ENCODE measurements at regions of chr18 and their contacts with region 1.

Region 1: DNA sequence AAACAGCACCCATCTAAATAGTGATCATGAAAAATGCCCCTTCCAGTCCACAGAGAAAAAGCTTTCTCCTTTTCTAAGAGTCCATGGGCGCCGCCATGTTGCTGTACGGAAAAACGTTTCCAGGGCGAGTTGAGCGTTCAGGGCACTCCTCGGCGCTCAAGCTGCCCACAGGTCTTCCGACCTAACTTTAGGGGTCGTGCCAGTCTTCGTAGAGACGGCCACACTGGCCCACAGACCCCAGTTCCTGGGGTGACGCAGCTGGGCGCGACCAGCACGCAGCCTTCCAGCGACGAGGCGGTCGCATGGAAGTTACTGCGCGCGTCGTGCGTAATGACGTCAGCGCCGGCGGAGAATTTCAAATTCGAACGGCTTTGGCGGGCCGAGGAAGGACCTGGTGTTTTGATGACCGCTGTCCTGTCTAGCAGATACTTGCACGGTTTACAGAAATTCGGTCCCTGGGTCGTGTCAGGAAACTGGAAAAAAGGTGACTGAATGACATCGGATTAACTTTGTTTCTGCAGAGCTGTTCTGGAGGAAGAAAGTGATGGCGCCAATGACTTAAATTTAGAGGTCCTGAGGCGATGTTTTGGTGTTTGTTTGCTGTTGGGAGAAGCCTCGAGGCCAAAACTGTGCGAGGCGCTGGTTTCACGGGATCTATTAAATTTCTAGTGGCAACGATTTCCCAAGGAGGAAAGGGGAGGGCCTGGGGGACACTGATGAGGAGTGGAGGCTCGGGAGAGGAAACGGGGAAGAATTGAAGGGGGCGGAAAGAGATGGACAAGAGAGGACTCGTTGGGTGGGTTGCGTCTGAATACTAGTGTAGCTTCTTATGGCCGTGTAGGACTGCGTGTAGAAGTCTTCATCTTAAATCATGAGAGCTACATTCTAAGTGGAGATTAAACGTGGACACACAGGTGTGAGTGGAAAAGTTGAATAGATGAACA is at the starts of genes METTL4 and NDC80:
- DNase-seq: peak; percentile 75 to 95 (median 82)
- ATAC-seq: peak; percentile 86 to 89
- H3K4me3 Mint-ChIP-seq: peak within 1 kb of the TSS; percentile 93 to 100 (median 98)
- H3K27ac Mint-ChIP-seq: peak within 1 kb of the TSS; percentile 95 to 100 (median 99)
- H3K4me1 Mint-ChIP-seq: peaks cover 29 to 68% (median 56%) of the 10 kb centered on the region in 4 donors
- H3K27me3 Mint-ChIP-seq: no peaks in the 10 kb centered on the region
- polyA plus RNA-seq, gene METTL4: 14.7 to 17.5 (median 16.9) TPM
- polyA plus RNA-seq, gene NDC80: 1.7 to 2.9 (median 1.9) TPM

Region 2: DNA sequence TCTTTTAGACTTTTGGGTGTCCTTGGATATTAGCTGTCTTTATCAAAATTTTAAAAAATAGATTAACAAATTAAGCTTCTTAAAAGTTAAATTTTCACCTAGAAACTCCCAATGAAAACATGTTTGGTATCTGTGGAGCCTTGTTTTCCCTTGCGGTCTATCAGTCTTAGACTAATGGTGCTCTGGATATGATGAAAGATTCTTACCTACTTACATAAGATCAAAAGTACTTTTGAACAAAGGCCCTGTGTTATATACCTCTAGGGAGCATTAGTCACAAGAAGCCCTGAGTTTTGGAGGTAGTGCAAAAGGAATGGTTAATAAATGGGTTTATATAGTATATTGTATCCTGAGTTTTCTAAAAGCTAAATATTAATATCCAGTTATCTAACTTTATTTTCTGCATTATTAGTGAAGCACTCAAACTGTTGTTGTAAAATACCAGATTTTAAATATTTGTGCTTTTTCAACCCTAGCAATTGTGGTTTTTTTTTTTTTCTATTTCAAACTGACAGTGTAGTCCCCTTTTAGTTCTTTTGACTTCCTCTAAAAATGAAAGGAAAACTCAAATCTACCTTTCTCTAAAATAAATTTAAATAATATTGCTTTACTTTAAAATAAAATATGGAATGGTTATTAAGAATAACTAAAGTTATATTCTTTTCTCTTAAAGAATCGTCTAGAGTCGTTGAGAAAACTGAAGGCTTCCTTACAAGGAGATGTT is 18.0 kb after region 1 on chr18:
- POLR2A ChIA-PET with region 1: interaction called, 14 read pairs
- DNase-seq: peak in 4 of 10 donors; percentile 1 to 58 (median 40)
- ATAC-seq: peak; percentile 85 to 87
- H3K4me3 Mint-ChIP-seq: peak overlapping the region; percentile 63 to 89 (median 78)
- H3K27ac Mint-ChIP-seq: peak overlapping the region; percentile 73 to 99 (median 96)
- H3K4me1 Mint-ChIP-seq: peaks cover 16 to 55% (median 46%) of the 10 kb centered on the region in 4 donors
- H3K27me3 Mint-ChIP-seq: no peaks in the 10 kb centered on the region

Region 3: DNA sequence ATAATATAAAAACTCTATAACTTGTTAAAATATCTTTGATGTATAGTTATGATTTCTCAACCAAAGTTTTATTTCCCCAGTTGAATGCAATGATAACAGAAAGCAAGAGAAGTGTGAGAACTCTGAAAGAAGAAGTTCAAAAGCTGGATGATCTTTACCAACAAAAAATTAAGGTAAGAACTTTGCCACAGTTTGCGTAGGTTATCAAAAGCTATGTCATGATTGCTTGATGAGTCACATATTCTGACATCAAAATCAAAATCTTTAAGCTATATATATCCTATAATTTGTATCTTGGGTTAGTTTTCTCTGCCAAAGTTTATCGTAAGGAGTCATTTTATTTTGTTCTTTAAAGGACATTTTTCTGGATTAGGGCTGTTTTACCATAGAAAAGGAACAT is 34.9 kb after region 1 on chr18:
- POLR2A ChIA-PET with region 1: interaction called, 10 read pairs
- DNase-seq: peak in 4 of 10 donors; percentile 19 to 53 (median 36)
- ATAC-seq: peak; percentile 51 to 75
- H3K4me3 Mint-ChIP-seq: peak overlapping the region; percentile 8 to 80 (median 68)
- H3K27ac Mint-ChIP-seq: peak overlapping the region in 9 of 10 donors; percentile 75 to 94 (median 89)
- H3K4me1 Mint-ChIP-seq: peaks cover 15 to 55% (median 42%) of the 10 kb centered on the region in 4 donors
- H3K27me3 Mint-ChIP-seq: no peaks in the 10 kb centered on the region

Region 4: GRCh38 chr18:2636126-2636631 is 64.7 kb after region 1 on chr18:
- POLR2A ChIA-PET with region 1: interaction called, 96 read pairs
- DNase-seq: peak in 1 of 10 donors; percentile 78
- ATAC-seq: peak; percentile 46 to 48
- H3K4me3 Mint-ChIP-seq: peak overlapping the region; percentile 73 to 91 (median 79)
- H3K27ac Mint-ChIP-seq: peak overlapping the region in 8 of 10 donors; percentile 93 to 100 (median 99)
- H3K4me1 Mint-ChIP-seq: peaks cover 45 to 98% (median 85%) of the 10 kb centered on the region in 4 donors
- H3K27me3 Mint-ChIP-seq: no peaks in the 10 kb centered on the region

Region 5: DNA sequence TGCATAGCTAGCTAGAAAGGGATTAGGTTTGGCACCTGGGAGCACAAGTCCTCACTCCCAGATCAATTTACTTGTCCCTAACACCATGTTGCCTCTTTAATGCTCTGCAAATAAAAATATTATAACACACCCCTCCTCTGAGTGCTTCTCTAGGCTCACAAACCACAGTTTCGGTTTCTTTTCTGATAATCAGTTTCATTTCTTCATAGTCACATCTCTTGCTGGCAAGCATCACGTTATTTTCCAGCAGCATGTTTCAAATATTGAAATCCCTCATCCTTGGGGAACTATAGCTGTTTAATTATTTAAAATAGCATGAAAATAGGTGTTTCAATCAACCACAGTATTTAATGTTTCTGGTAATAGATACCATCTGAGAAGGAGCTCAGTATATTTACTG is 70.2 kb after region 1 on chr18:
- POLR2A ChIA-PET with region 1: interaction called, 96 read pairs
- DNase-seq: peak in 3 of 10 donors; percentile 52
- ATAC-seq: peak in 1 of 2 donors; percentile 23
- H3K4me3 Mint-ChIP-seq: peak overlapping the region; percentile 65 to 94 (median 82)
- H3K27ac Mint-ChIP-seq: peak overlapping the region in 5 of 10 donors; percentile 87 to 99 (median 97)
- H3K4me1 Mint-ChIP-seq: peaks cover 23 to 59% (median 48%) of the 10 kb centered on the region in 4 donors
- H3K27me3 Mint-ChIP-seq: no peaks in the 10 kb centered on the region

Measured in naive thymus-derived CD8-positive, alpha-beta T cell (primary cell).